Activated CD8-positive, alpha-beta T cell treated with anti-CD3 and anti-CD28 coated beads for 36 hours (primary cell): ENCODE measurements at regions of chr2 and their contacts with region 1.

Region 1: GRCh38 chr2:44392338-44392943 is 30.7 kb downstream of the CAMKMT start:
- DNase-seq: peak; percentile 72
- ATAC-seq: no peak
- H3K4me3 Mint-ChIP-seq: no peak overlapping the region
- H3K27ac Mint-ChIP-seq: no peak overlapping the region
- H3K4me1 Mint-ChIP-seq: peaks cover 9% of the 10 kb centered on the region
- H3K27me3 Mint-ChIP-seq: no peaks in the 10 kb centered on the region
- CTCF ChIP-seq: peak; percentile 75

Region 2: GRCh38 chr2:44369392-44369791 is 23.0 kb before region 1 on chr2:
- CTCF ChIA-PET with region 1: interaction called, 12 read pairs
- POLR2A ChIA-PET with region 1: interaction called, 3 read pairs
- intact Hi-C with region 1: no loop called
- DNase-seq: no peak
- ATAC-seq: no peak
- H3K4me3 Mint-ChIP-seq: no peak overlapping the region
- H3K27ac Mint-ChIP-seq: no peak overlapping the region
- H3K4me1 Mint-ChIP-seq: peaks cover 23% of the 10 kb centered on the region
- H3K27me3 Mint-ChIP-seq: no peaks in the 10 kb centered on the region
- CTCF ChIP-seq: no peak

Region 3: DNA sequence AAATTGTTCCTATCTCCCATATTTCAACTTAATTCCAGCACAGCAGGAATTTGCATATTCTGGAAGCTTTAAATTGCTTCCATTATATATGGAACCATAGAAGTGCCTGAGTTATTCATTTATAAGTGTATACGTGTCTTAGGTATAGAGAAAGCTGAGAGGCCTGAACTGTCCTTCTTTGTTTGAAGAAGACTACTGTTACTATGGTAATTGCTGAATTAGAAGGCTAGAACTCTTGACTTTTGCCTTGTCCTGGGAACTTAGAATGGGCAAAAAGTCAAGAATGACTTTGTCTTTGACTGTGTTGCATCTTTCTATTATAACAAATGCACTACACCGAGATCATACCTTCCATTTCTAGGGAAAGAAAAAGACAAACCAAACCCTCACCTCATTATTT is 15.0 kb before region 1 on chr2:
- CTCF ChIA-PET with region 1: interaction called, 13 read pairs
- POLR2A ChIA-PET with region 1: no interaction called
- intact Hi-C with region 1: no loop called
- DNase-seq: no peak
- ATAC-seq: no peak
- H3K4me3 Mint-ChIP-seq: no peak overlapping the region
- H3K27ac Mint-ChIP-seq: no peak overlapping the region
- H3K4me1 Mint-ChIP-seq: peaks cover 2% of the 10 kb centered on the region
- H3K27me3 Mint-ChIP-seq: no peaks in the 10 kb centered on the region
- CTCF ChIP-seq: no peak